SK-N-SH (cell line): ENCODE measurements at regions of chr3 and their contacts with region 1.

Region 1: GRCh38 chr3:48194446-48195071 is 6.3 kb upstream of the CDC25A start:
- DNase-seq: peak; percentile 82
- H3K4me3 ChIP-seq: peak overlapping the region in 1 of 2 experiments; percentile 42; a peak in 1 of 4 replicates
- H3K27ac ChIP-seq: no peak overlapping the region
- H3K4me1 ChIP-seq: no peaks in the 10 kb centered on the region
- H3K27me3 ChIP-seq: no peaks in the 10 kb centered on the region
- CTCF ChIP-seq: peak; percentile 91
- EP300 ChIP-seq: no peak
- RAD21 ChIP-seq: peak; percentile 80

Region 2: DNA sequence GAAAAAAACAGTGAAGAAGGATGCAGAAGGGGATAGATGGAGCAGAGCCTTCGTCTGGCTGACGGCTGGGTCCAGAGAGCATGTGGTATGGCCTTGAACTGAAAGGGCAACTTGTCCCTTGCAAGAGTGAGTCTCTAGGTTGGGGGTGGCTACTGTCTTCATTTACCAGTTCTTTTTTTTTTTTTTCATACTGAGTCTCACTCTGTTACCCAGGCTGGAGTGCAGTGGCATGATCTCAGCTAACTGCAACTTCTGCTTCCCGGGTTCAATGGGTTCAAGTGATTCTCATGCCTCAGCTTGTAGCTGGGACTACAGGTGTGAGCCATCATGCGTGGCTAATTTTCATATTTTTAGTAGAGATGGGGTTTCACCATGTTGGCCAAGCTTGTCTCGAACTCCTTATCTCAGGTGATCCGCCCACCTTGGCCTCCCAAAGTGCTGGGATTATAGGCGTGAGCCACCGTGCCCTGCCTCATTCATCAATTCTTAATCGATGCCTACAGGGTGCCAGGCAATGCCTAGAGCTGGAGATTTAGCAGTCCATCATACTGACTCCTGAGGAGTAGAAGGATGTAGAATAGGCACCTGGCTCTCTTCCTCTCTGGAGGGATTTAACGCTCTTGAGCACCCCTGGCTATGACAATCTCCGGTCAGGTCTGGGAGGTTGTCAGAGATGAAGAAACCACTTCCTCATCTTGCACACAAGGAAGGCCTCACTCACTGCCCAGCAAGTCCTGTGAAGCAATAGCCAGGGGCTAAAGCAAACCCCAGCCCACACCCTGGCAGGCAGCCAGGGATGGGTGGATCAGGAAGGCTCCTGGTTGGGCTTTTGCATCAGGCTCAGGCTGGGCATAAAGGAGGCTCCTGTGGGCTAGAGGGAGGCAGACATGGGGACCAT is 28.3 kb after region 1 on chr3 and contains the start of gene CAMP:
- CTCF ChIA-PET with region 1: interaction called, 12 read pairs
- POLR2A ChIA-PET with region 1: no interaction called
- DNase-seq: peak; percentile 72
- H3K4me3 ChIP-seq: no peak within 1 kb of the TSS
- H3K27ac ChIP-seq: no peak within 1 kb of the TSS
- H3K4me1 ChIP-seq: peaks cover 0 to 7% of the 10 kb centered on the region in 2 experiments; a peak in 1 of 4 replicates
- H3K27me3 ChIP-seq: peaks cover 7% of the 10 kb centered on the region; the same call in 1 of the 2 replicates
- CTCF ChIP-seq: no peak
- EP300 ChIP-seq: no peak
- RAD21 ChIP-seq: no peak
- polyA plus RNA-seq, gene CAMP: not detected in 2 replicates

Region 3: GRCh38 chr3:48240711-48241491 is 46.3 kb after region 1 on chr3 and contains the start of gene ZNF589:
- CTCF ChIA-PET with region 1: interaction called, 12 read pairs
- POLR2A ChIA-PET with region 1: no interaction called
- DNase-seq: peak; percentile 94
- H3K4me3 ChIP-seq: peak within 1 kb of the TSS; percentile 69
- H3K27ac ChIP-seq: peak within 1 kb of the TSS; percentile 61 to 78
- H3K4me1 ChIP-seq: no peaks in the 10 kb centered on the region; a peak in 1 of 4 replicates
- H3K27me3 ChIP-seq: no peaks in the 10 kb centered on the region
- CTCF ChIP-seq: peak; percentile 29
- EP300 ChIP-seq: no peak
- RAD21 ChIP-seq: no peak
- polyA plus RNA-seq, gene ZNF589: 4.4 and 8.0 TPM in 2 replicates

Region 4: GRCh38 chr3:48273594-48274211 is 79.1 kb after region 1 on chr3:
- CTCF ChIA-PET with region 1: interaction called, 20 read pairs
- POLR2A ChIA-PET with region 1: no interaction called
- DNase-seq: peak; percentile 85
- H3K4me3 ChIP-seq: no peak overlapping the region; a peak in 1 of 4 replicates
- H3K27ac ChIP-seq: no peak overlapping the region
- H3K4me1 ChIP-seq: no peaks in the 10 kb centered on the region; a peak in 1 of 4 replicates
- H3K27me3 ChIP-seq: no peaks in the 10 kb centered on the region
- CTCF ChIP-seq: peak; percentile 81
- EP300 ChIP-seq: no peak
- RAD21 ChIP-seq: peak; percentile 95

Region 5: GRCh38 chr3:48429317-48429959 is 234.9 kb after region 1 on chr3:
- CTCF ChIA-PET with region 1: interaction called, 93 read pairs
- POLR2A ChIA-PET with region 1: no interaction called
- DNase-seq: peak; percentile 93
- H3K4me3 ChIP-seq: peak overlapping the region; percentile 73 to 79
- H3K27ac ChIP-seq: peak overlapping the region; percentile 54 to 89; a peak in 3 of 4 replicates
- H3K4me1 ChIP-seq: peaks cover 7 to 49% of the 10 kb centered on the region in 2 experiments; a peak in 2 of 4 replicates
- H3K27me3 ChIP-seq: no peaks in the 10 kb centered on the region
- CTCF ChIP-seq: no peak
- EP300 ChIP-seq: no peak
- RAD21 ChIP-seq: no peak

Region 6: DNA sequence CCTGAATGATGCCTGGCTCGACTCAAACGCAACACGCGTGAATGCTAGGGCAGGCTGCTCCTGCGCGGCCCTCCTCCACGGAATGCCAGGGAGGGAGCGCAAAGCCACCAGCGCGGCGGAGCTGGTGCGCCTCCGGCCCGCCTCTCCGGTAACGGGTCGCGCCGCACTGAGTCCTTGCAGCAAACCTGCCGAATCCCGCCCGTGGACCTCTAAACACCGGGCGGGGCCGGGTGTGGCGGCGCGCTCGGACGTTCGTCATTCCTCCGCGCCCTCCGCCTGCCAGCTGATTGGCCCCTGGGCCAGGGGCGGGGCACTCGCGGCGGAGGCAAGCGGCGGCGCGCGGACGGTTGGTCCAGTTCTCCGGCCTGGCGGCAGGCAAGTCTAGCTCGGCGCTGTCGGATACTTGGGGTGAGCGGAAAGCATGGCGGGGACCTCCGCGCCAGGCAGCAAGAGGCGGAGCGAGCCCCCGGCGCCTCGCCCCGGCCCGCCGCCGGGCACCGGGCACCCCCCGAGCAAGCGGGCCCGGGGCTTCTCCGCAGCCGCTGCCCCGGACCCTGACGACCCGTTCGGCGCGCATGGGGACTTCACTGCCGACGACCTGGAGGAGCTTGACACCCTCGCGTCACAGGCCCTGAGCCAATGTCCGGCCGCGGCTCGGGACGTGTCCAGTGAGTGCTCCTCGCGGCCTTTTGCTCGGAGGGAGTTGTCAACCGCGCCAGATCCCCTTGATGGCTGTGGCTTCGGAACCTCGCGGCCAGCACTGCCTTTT is 252.1 kb after region 1 on chr3 and contains the start of gene ATRIP:
- CTCF ChIA-PET with region 1: interaction called, 13 read pairs
- POLR2A ChIA-PET with region 1: no interaction called
- DNase-seq: peak; percentile 98
- H3K4me3 ChIP-seq: peak within 1 kb of the TSS; percentile 77 to 97
- H3K27ac ChIP-seq: peak within 1 kb of the TSS; percentile 68 to 74
- H3K4me1 ChIP-seq: peaks cover 5 to 18% of the 10 kb centered on the region in 2 experiments
- H3K27me3 ChIP-seq: no peaks in the 10 kb centered on the region
- CTCF ChIP-seq: no peak
- EP300 ChIP-seq: no peak
- RAD21 ChIP-seq: no peak
- polyA plus RNA-seq, gene ATRIP: 5.6 and 6.5 TPM in 2 replicates